ENCODE measurements at regions of chr12 and their contacts with region 1.

Region 1: GRCh38 chr12:96061864-96062453 is 26.6 kb upstream of the LTA4H start:
- DNase-seq: peak; percentile 82
- ATAC-seq: peak; percentile 87
- H3K4me3 Mint-ChIP-seq: no peak overlapping the region
- H3K27ac Mint-ChIP-seq: no peak overlapping the region
- H3K4me1 Mint-ChIP-seq: peaks cover 22% of the 10 kb centered on the region
- H3K27me3 Mint-ChIP-seq: no peaks in the 10 kb centered on the region

Region 2: GRCh38 chr12:96020314-96021003 is 41.5 kb before region 1 on chr12:
- CTCF ChIA-PET with region 1: no interaction called
- DNase-seq: no peak
- ATAC-seq: no peak
- H3K4me3 Mint-ChIP-seq: no peak overlapping the region
- H3K27ac Mint-ChIP-seq: no peak overlapping the region
- H3K4me1 Mint-ChIP-seq: no peaks in the 10 kb centered on the region
- H3K27me3 Mint-ChIP-seq: no peaks in the 10 kb centered on the region

Region 3: GRCh38 chr12:96208801-96209549 is 147.0 kb after region 1 on chr12:
- CTCF ChIA-PET with region 1: interaction called, 92 read pairs
- DNase-seq: no peak
- ATAC-seq: no peak
- H3K4me3 Mint-ChIP-seq: no peak overlapping the region
- H3K27ac Mint-ChIP-seq: no peak overlapping the region
- H3K4me1 Mint-ChIP-seq: peaks cover 76% of the 10 kb centered on the region
- H3K27me3 Mint-ChIP-seq: no peaks in the 10 kb centered on the region

Region 4: DNA sequence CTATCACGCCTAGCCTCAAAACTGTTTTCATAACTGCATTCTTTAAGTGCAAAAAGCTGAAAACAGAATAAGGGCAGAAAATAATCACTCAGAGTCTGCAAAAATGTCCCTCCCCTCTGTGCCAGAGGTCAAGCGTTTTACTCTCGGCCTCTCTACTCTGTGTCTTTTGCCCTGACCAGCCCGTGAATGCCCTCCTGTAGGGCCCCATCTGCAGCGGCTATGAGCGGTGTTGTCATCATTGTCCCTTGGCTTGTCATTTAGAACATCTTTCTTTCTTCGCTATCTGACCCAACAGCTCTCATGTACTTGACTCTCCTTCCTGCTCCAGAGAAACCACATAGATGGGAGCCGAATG is 153.9 kb after region 1 on chr12:
- CTCF ChIA-PET with region 1: interaction called, 92 read pairs
- DNase-seq: no peak
- ATAC-seq: no peak
- H3K4me3 Mint-ChIP-seq: no peak overlapping the region
- H3K27ac Mint-ChIP-seq: no peak overlapping the region
- H3K4me1 Mint-ChIP-seq: peaks cover 37% of the 10 kb centered on the region
- H3K27me3 Mint-ChIP-seq: no peaks in the 10 kb centered on the region